WTC11 (cell line): ENCODE measurements at regions of chr2 and their contacts with region 1.

Region 1: DNA sequence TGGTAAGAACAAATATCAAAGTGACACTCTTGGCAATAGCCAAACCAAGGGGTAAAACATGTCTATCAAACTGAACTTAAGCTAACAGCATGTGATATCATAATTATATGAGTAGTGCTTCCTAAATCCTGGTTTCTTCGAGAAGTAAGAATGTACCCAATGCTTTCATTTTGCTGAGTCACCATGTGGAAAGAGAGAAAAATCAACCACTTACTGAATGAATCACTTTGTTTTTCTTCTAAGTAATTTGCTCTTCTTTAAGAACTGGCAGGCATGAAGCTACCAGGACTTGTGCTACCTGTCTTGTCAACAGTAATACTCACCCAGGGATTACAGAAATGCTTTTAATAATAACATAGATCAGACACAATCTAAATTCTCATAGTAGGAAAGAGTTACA is 19.0 kb upstream of the DUSP19 start:
- DNase-seq: no peak
- ATAC-seq: no peak
- H3K4me3 Mint-ChIP-seq: no peak overlapping the region
- H3K27ac Mint-ChIP-seq: 0 out of 2 replicates have a peak overlapping the region, but pooled peaks have one; percentile 13
- H3K4me1 Mint-ChIP-seq: peaks cover 4% of the 10 kb centered on the region
- H3K27me3 Mint-ChIP-seq: no peaks in the 10 kb centered on the region
- CTCF ChIP-seq: no peak

Region 2: DNA sequence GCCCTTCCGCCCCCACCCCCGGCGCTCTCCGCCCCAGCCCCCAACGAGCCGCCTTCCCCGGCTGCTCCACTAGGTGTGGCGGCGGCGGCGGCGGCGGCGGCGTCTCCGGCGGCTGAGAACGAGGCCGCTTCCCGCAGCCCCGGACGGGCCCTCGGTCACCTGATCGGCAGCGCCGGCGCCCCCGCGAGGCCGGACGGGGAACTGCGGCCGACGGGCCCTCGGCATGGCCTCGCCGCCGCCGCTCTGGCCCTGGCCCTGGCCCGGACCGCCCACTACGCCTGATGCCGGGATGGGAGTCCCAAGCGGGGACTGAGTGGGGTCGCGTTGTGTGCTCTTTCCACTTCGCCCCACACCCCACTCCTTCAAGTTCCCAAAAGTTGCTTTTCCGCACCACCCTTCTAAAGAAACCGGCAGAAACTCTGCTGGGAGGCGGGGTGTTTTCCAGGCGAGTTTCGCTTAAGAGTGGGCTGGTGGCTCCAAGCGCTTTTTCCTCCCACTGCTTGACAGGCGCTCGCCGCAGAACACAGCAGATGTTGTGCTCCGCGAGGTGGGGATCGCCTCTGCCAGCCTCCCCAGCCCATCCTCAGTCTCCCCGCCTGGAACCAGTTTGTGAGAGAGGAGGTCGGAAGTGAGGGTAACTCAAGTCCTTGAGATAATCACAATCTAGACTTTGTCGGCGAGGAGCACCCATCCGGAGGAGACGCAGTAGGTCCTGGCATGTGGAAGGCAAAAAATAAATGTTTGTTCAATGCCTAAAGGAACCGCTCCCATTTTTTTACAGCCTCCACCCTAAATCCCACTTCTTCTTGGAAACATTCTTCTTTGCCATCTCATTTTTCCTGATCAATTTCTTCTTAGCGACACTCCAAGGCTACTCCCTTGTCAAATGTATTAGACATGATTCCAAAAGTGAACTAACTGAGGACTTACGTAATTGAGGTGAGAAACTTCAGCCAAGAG is 20.9 kb before region 1 on chr2 and contains the start of gene NCKAP1:
- CTCF ChIA-PET with region 1: no interaction called
- POLR2A ChIA-PET with region 1: no interaction called
- DNase-seq: peak; percentile 95
- ATAC-seq: peak; percentile 87
- H3K4me3 Mint-ChIP-seq: peak within 1 kb of the TSS; percentile 91
- H3K27ac Mint-ChIP-seq: peak within 1 kb of the TSS; percentile 96
- H3K4me1 Mint-ChIP-seq: peaks cover 43% of the 10 kb centered on the region
- H3K27me3 Mint-ChIP-seq: no peaks in the 10 kb centered on the region
- CTCF ChIP-seq: peak; percentile 93
- total RNA-seq, gene NCKAP1: 148 to 173 TPM (median 149 TPM) in 3 replicates

Region 3: GRCh38 chr2:183070942-183071844 is 11.6 kb after region 1 on chr2:
- CTCF ChIA-PET with region 1: interaction called, 16 read pairs
- POLR2A ChIA-PET with region 1: no interaction called
- DNase-seq: peak; percentile 88
- ATAC-seq: peak; percentile 93
- H3K4me3 Mint-ChIP-seq: peak overlapping the region; percentile 30
- H3K27ac Mint-ChIP-seq: no peak overlapping the region
- H3K4me1 Mint-ChIP-seq: peaks cover 8% of the 10 kb centered on the region
- H3K27me3 Mint-ChIP-seq: peaks cover 3% of the 10 kb centered on the region
- CTCF ChIP-seq: peak; percentile 28; the same call in 1 of the 2 replicates

Region 4: DNA sequence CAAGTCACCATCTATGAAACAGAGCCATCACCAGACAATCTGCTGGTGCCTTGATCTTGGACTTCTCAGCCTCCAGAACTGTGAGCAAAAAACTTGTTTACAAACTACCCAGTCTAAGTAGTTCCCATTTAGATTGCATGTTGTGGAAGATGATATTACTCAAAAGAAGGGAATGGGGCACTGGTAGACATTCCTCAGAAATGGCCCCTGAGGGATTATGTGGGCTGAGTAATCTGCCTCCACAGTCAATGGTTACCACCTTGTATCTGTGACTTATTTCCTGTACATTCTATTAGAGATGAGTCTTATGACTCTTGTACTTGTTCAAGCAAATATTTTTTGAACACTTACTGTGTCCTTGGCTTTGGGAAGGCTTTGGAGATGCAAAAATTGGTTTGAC is 225.0 kb after region 1 on chr2:
- CTCF ChIA-PET with region 1: no interaction called
- POLR2A ChIA-PET with region 1: no interaction called
- DNase-seq: no peak
- ATAC-seq: no peak
- H3K4me3 Mint-ChIP-seq: no peak overlapping the region
- H3K27ac Mint-ChIP-seq: no peak overlapping the region
- H3K4me1 Mint-ChIP-seq: peaks cover 6% of the 10 kb centered on the region; the same call in 1 of the 2 replicates
- H3K27me3 Mint-ChIP-seq: peaks cover 74% of the 10 kb centered on the region
- CTCF ChIP-seq: no peak